ENCODE measurements at regions of chr14 and their contacts with region 1.

Region 1: GRCh38 chr14:35909665-35910064 is 83.5 kb downstream of the BRMS1L start:
- DNase-seq: no peak
- H3K4me3 ChIP-seq: no peak overlapping the region
- H3K27ac ChIP-seq: no peak overlapping the region
- H3K4me1 ChIP-seq: no peaks in the 10 kb centered on the region
- H3K27me3 ChIP-seq: no peaks in the 10 kb centered on the region
- CTCF ChIP-seq: no peak
- EP300 ChIP-seq: no peak
- POLR2A ChIP-seq: no peak

Region 2: GRCh38 chr14:35747379-35747778 is 162.3 kb before region 1 on chr14:
- intact Hi-C with region 1: no loop called
- DNase-seq: no peak
- H3K4me3 ChIP-seq: no peak overlapping the region
- H3K27ac ChIP-seq: no peak overlapping the region
- H3K4me1 ChIP-seq: peaks cover 0 to 7% (median 3%) of the 10 kb centered on the region in 4 donors
- H3K27me3 ChIP-seq: no peaks in the 10 kb centered on the region
- CTCF ChIP-seq: no peak
- EP300 ChIP-seq: no peak
- POLR2A ChIP-seq: no peak

Region 3: DNA sequence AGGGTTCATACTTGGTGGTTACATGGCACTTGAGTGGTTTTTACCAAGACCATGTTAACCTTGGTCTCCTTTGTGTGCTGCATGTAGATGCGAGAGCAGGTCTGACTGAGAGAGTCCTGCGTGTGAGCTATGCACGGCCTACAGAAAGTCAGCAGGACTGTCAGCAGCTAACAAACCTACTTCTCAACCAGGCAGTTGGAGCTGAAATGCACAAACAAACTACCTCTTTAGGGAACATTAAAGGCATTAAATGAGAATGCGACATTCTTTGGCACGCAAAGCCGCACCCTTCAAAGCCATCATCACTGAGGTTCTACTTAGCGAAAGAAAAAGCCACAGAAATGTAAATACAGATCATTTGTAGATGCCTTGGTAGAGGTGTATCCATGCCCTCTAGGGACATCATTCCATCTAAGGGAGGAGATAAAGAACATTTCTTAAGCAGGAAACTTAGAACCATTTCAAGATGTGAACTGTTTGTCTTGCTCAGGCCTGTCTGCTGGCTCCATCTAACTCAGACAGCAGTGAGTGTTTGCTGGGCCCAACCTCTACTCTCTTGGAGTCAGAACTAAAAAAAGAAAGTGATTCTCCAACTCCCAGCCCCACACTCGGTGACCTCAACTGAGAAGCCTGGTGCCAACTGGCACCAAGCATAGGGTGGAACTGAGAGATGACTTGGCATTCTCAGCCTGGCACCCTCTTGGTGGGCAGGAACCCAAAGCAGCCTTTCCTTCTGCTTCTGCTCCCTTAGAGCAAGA is 474.2 kb after region 1 on chr14:
- intact Hi-C with region 1: loop called (anchors 10 kb)
- DNase-seq: no peak
- H3K4me3 ChIP-seq: no peak overlapping the region
- H3K27ac ChIP-seq: peak overlapping the region in 1 of 4 donors; percentile 2
- H3K4me1 ChIP-seq: peaks cover 0 to 10% (median 2%) of the 10 kb centered on the region in 4 donors
- H3K27me3 ChIP-seq: no peaks in the 10 kb centered on the region
- CTCF ChIP-seq: no peak
- EP300 ChIP-seq: no peak
- POLR2A ChIP-seq: no peak

Measured in esophagus muscularis mucosa (tissue), 4 donors.